GM10248 (cell line): ENCODE measurements at regions of chr2 and their contacts with region 1.

Region 1: GRCh38 chr2:65320042-65320725 is 92.6 kb downstream of the ACTR2 start:
- DNase-seq: peak; percentile 57
- CTCF ChIP-seq: peak; percentile 31

Region 2: DNA sequence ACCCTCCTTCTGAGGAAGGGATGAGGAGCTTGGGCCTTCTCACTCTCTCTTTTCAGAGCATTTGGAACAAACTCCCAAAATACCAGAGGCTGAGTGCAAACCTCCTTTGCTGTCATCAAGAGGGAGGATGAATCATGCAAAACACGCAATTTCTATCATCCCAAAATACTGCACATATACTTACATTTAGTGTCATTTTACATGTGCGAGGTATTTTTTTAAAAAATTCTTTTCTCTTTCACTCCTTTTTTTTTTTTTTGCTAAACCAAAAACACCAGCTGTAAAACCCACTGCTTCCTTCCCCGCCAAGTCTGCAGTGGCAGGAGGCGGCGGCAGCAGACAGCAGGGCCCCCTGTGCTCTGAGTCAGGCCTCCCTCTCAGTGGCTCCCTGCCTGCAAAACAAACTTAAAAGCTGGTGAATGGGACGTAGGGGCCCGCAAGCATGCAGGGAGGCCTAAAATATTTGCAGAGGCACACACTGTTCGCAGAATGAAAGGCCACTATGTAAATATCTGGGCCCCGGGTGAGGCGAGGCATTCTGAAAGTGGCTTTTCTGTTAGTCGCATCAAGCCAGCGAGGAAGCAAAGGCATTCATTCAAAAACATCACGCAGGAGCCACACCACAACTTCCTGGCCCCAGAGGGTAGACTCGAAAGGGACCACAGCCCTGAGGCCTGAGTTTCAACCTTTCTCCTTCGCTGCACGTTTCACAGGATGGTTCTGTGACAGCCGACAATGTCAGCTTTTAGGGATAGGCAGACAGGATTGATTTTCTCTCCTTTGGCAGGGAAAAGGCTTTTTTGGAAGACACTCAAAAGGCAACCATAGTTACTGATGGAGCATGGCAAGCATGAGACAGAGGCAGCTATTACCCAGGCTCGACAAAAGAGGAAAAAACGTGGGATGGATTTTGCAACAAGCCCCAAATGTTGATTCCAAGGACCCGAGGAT is 19.1 kb before region 1 on chr2:
- CTCF ChIA-PET with region 1: interaction called, 11 read pairs
- POLR2A ChIA-PET with region 1: no interaction called
- DNase-seq: peak; percentile 80
- CTCF ChIP-seq: no peak

Region 3: DNA sequence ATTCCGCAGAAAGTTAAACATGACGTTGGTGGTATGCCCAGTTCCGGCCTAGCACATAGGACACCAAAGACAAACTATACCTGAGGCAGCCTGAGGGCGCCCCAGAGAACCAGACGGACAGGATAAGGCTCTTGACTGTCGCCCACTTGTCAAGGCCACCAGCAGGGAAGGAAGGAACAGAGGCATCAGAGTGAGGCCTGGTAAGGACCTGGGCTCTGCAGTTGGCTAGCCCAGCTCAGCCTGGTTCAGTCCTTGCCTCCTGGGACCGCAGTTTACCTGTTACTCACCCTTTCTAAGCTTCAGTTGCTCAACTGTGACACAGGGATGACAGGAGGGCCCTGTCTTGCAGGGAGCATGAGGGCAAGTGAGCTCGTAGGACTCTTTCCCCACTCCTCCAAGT is 10.5 kb before region 1 on chr2:
- CTCF ChIA-PET with region 1: interaction called, 11 read pairs
- POLR2A ChIA-PET with region 1: no interaction called
- DNase-seq: no peak
- CTCF ChIP-seq: no peak

Region 4: DNA sequence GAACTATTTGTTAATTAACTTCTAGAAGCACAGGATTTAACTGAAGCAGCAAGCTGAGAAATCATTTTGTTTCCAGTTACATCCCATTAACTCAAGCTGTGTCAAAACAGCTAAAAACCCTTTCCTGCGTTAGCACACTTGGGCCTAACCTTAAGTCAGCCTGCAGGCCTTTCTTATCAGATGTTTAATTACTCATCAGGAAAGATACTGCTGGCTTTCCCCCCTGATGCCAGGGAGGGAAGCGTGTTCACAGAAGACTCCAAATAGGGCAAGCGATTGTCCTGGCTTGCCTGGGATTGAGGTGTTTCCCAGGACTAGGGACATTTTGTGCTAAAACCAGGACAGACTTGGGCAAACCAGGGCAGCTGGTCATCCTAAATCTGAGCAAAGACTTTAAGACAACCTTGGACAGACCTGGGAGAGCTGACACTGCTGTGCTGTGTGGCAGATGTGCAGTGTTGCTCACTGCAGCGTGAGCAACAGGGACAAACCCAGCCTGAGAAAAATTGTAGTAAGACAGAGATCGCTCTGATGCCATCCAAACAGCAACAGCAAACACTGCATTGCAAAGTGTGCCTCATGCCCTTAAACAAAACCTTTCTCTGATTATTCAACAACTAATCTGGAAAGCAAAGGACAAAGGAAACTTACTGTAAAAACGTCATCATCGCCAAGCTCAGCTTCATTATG is 11.3 kb after region 1 on chr2:
- CTCF ChIA-PET with region 1: interaction called, 14 read pairs
- POLR2A ChIA-PET with region 1: no interaction called
- DNase-seq: no peak
- CTCF ChIP-seq: no peak